ENCODE measurements at regions of chr2 and their contacts with region 1.

Region 1: DNA sequence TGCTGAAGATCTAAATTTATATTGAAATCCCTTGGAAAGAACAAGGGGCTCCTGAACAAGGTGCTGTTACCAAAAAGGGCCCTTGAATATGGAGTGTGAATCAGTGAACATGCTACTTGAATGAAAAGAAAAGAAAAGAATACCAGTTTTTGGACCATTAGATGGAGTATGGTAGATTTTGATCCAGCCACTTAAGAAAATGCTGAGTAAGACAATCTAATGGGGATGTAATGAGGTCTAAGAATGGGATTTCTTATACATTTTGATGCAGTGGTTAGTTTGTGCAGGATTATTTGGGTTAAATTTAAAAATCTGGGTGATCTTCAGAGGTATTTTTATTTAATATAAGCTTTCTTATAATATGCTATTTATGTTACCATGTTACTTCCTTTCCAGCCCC is 2003.0 kb upstream of the LRRTM1 start:
- DNase-seq: no peak
- ATAC-seq: no peak
- H3K4me3 ChIP-seq: no peak overlapping the region
- H3K27ac ChIP-seq: no peak overlapping the region
- H3K4me1 ChIP-seq: no peaks in the 10 kb centered on the region
- H3K27me3 ChIP-seq: no peaks in the 10 kb centered on the region
- CTCF ChIP-seq: no peak
- EP300 ChIP-seq: no peak
- POLR2A ChIP-seq: no peak
- RAD21 ChIP-seq: no peak

Region 2: DNA sequence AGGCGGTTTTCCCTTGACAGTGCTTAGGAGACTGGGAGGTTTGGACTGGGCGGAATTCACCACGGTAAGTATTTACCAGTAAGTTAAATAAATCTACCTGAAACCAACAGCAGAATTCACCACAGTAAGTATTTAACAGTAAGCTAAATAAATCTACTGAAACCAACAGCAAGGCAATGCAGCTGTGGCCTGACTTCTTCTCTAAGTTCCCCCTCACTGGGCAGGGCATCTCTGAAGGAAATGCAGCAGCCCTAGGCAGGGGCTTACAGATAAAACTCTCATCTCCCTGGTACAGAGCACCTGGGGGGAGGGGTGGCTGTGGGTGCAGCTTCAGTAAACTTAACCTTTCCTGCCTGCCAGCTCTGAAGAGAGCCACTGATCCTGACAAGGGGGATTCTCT is 1570.5 kb before region 1 on chr2:
- CTCF ChIA-PET with region 1: no interaction called
- POLR2A ChIA-PET with region 1: no interaction called
- in situ Hi-C with region 1: no loop called
- intact Hi-C with region 1: loop called (anchors 5 kb)
- DNase-seq: no peak
- ATAC-seq: no peak
- H3K4me3 ChIP-seq: no peak overlapping the region
- H3K27ac ChIP-seq: no peak overlapping the region
- H3K4me1 ChIP-seq: no peaks in the 10 kb centered on the region
- H3K27me3 ChIP-seq: no peaks in the 10 kb centered on the region
- CTCF ChIP-seq: no peak
- EP300 ChIP-seq: no peak
- POLR2A ChIP-seq: no peak
- RAD21 ChIP-seq: no peak

Region 3: DNA sequence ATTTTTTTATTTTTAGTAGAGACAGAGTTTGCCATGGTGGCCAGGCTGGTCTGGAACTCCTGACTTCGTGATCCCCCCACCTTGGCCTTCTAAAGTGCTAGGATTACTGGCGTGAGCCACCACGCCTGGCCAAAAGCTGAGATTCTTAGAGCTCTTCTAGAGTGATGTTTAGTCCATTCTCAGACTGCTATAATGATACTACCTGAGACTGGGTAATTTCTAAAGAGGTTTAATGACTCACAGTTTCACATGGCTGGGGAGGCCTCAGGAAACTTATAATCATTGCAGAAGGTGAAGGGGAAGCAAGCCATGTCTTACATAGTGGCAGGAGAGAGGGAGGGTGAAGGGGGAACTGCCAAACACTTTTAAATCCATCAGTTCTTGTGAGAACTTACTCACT is 198.1 kb before region 1 on chr2:
- CTCF ChIA-PET with region 1: no interaction called
- POLR2A ChIA-PET with region 1: no interaction called
- in situ Hi-C with region 1: no loop called
- intact Hi-C with region 1: no loop called
- DNase-seq: no peak
- ATAC-seq: no peak
- H3K4me3 ChIP-seq: no peak overlapping the region
- H3K27ac ChIP-seq: no peak overlapping the region
- H3K4me1 ChIP-seq: no peaks in the 10 kb centered on the region
- H3K27me3 ChIP-seq: no peaks in the 10 kb centered on the region
- CTCF ChIP-seq: no peak
- EP300 ChIP-seq: no peak
- POLR2A ChIP-seq: no peak
- RAD21 ChIP-seq: no peak

Region 4: DNA sequence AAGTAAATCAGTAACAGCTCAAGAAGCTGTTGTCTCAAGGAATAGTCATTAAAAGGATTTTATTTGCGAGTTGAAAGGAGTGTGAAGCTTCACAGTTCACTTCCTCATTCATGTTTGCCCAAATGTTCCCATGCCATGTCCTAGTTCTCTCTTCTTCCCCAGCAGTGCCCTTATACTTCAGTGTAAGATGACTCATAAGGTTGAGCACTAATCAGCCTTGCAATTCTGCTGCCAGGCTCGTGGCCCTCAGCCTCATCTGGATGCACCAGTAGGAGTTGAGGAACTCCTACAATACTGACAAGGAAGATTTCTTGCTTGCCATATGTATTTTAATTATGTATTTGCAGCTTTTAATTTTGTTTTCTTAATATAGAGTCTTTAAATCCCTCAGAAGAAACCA is 171.1 kb after region 1 on chr2:
- CTCF ChIA-PET with region 1: no interaction called
- POLR2A ChIA-PET with region 1: no interaction called
- in situ Hi-C with region 1: no loop called
- intact Hi-C with region 1: no loop called
- DNase-seq: no peak
- ATAC-seq: no peak
- H3K4me3 ChIP-seq: no peak overlapping the region
- H3K27ac ChIP-seq: no peak overlapping the region
- H3K4me1 ChIP-seq: no peaks in the 10 kb centered on the region
- H3K27me3 ChIP-seq: no peaks in the 10 kb centered on the region
- CTCF ChIP-seq: no peak
- EP300 ChIP-seq: no peak
- POLR2A ChIP-seq: no peak
- RAD21 ChIP-seq: no peak